ENCODE measurements at regions of chr1 and their contacts with region 1.

Region 1: DNA sequence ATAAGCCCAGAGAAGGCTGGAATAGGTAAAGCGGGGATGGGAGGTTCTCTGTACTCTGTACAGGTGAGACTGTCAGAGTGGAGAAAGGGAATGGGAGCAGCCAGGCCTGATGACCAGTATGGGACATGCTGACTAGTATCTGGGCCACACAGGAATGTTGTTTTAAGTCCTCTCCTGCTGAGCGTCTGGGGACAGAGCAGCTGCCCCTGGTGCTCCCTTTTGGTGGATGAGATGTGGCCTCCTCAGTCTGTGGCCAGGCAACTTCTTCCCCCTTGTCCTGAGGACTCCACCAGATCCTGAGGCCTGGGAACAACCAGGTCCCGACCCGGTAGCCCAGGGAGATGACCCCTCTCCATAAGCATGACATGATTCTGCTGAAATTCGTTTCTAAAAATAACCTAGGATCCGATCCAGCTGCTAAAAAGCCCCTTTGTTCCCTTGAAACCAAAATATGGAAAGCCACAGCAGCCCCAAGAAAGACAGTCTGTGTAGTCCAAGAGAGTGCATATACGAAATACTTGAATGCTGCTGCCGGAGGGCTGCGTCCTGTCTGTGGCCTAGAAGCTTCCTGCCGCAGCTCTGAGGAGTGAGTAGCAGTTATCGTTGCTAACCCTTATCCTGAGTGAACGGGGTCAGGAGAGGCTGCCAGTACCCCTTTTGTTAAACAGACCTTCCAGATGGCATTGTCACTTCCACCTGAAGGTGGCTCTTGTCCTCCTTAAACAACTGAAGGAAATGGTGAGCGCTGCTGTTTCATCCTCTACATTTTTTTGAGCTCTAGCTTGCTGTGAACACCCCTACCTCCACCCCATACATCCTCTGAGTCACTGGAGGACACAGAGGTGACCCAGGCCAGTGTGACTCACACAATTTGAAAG is 47.2 kb downstream of the ATP2B4 start:
- DNase-seq: no peak
- ATAC-seq: peak; percentile 22

Region 2: DNA sequence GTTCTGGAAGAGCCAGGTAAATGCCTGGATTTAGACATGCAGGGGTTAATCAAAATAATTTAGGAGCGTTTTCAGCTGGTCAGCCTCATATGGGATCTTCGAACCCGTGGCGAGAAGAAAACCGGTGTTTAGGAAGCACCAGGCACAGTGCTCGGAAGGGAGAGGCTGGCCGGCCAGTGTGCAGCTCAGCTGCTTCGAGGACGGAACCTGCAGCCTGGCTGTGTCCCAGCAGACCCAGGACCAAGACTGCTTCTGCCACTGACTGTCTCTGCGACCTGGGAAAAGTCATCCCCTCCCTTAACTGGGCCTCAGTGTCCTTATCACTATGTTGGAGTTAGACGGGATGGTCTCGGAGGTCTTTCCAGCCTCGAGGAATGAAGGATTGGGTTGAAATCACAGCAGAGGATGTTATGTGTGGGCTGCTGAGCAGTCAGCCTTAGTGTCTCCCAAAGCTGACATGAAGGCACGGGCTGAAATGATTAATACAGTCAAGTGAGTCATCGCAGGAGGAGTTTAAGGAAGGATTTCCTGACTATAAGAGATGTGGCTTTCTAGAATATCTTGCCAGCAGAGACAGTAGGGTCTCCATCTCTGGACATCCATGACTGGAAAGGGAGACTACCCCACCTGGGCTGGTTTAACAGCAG is 626.7 kb before region 1 on chr1:
- intact Hi-C with region 1: no loop called
- DNase-seq: no peak
- ATAC-seq: no peak

Region 3: DNA sequence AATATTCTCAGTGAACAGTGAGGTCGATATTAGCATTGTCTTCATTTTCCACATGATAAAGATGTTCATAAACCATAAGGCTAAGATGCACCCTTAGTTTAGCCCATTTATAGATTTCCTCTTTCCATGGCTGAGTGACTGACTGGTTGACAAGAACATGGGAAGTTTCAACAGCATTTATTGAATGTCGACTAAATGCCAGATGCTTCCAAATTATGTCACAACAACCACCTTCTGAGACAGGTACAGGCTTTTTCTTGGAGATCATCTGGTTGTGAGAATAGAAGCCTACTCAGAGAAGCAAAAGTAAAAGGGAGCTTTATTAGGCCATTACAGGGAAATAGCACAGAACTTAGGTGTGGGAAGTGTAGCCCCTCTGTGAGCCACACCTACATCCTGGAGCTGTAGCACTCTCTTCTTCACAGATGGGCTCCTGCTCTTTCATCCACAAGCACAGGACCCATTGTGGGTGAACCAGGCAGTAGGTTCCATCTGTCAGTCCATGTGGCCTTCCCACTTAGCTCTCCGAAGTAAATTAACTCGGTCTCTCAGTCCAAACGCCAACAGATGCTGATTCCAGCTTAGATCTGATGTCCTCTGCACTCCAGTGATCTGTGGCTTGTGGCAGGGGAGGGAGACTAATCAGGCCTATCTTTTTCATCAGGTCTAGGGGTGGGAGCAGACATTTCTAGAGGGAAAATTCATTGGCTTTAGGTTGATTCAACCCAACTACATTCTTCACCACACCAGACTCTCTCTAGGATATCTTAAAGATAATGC is 32.9 kb before region 1 on chr1:
- intact Hi-C with region 1: loop called (anchors 2 kb)
- DNase-seq: no peak
- ATAC-seq: no peak

Region 4: GRCh38 chr1:203692565-203693470 is 19.0 kb after region 1 on chr1:
- intact Hi-C with region 1: loop called (anchors 2 kb)
- DNase-seq: peak; percentile 86
- ATAC-seq: peak; percentile 90

Region 5: DNA sequence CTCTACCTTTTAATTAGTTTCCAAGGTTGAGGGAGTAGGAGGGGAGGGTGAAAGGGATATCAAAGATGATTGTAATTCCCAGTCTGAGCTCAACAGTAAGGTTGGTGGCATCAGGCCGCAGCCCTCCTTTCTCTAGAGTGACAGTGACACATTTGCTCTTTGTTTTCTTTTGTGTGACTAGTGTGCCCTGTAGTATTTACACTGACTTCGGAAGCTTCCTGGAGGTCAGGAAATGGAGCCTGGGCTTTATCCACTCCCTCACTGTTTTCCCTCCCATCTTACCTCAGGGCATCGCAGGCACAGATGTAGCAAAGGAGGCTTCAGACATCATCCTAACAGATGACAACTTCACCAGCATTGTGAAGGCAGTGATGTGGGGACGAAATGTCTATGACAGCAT is 46.5 kb after region 1 on chr1:
- intact Hi-C with region 1: no loop called
- DNase-seq: no peak
- ATAC-seq: no peak